Transverse colon (tissue), 4 donors: ENCODE measurements at regions of chr13 and their contacts with region 1.

Region 1: GRCh38 chr13:99501184-99501847 is at the start of gene TM9SF2:
- DNase-seq: peak; percentile 99
- H3K4me3 ChIP-seq: peak within 1 kb of the TSS; percentile 69 to 98 (median 92)
- H3K27ac ChIP-seq: peak within 1 kb of the TSS; percentile 92 to 97 (median 96)
- H3K4me1 ChIP-seq: peaks cover 11 to 82% (median 46%) of the 10 kb centered on the region in 4 donors
- H3K27me3 ChIP-seq: no peaks in the 10 kb centered on the region
- CTCF ChIP-seq: peak in 1 of 5 experiments; percentile 5
- EP300 ChIP-seq: no peak
- POLR2A ChIP-seq: peak; percentile 89
- total RNA-seq, gene TM9SF2: 27.9 to 171 (median 116) TPM

Region 2: DNA sequence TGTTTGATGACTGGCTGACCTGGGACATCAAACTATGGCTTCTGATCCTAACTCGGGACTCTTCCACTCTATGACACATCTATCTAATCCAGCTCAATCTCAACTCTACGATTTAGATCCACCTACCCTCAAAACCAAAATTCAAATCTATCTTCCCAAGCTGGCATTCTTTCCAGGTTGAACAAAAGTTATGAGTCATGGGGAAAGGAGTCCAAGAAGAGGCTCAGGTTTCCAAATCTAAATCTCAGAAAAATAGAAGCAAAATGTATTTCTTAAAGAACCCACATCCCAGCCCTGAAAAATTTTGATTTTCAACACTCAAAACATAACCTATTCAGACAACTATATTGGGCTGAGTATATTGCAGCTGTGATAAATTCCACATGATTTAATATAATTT is 1691.7 kb before region 1 on chr13:
- in situ Hi-C with region 1: no loop called
- intact Hi-C with region 1: loop called (anchors 10 kb)
- DNase-seq: no peak
- H3K4me3 ChIP-seq: no peak overlapping the region
- H3K27ac ChIP-seq: no peak overlapping the region
- H3K4me1 ChIP-seq: no peaks in the 10 kb centered on the region
- H3K27me3 ChIP-seq: no peaks in the 10 kb centered on the region
- CTCF ChIP-seq: no peak
- EP300 ChIP-seq: no peak
- POLR2A ChIP-seq: no peak

Region 3: DNA sequence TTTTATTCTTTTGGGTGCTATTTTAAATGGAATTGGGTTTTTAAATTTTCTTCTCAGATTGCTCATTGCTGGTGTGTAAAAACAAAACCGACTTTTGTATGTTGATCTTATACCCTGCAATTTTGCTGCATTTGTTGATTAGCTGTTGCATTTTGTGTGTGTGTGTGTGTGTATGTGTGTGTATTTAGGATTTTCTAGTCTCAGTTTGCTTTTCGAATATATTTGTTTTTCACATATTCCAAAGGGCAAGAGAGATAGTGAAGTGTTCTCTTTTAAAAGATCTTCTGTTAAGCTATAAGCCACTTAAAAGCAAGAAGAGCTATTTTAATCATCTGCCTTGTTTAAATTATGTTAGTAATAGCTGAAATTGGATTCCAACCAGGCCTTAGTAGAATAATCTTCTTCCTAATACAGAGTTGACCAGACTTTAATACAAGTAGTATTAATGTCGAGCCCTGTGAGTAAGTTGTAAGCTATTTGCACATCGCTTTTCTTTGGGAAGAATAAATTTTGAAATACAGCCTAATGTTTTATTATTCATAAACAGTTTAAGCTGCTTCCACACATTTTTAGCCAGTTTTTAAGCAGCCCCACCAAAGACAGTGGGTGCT is 57.4 kb after region 1 on chr13:
- in situ Hi-C with region 1: no loop called
- intact Hi-C with region 1: no loop called
- DNase-seq: no peak
- H3K4me3 ChIP-seq: no peak overlapping the region
- H3K27ac ChIP-seq: no peak overlapping the region
- H3K4me1 ChIP-seq: peaks cover 0 to 3% (median 0%) of the 10 kb centered on the region in 4 donors
- H3K27me3 ChIP-seq: no peaks in the 10 kb centered on the region
- CTCF ChIP-seq: no peak
- EP300 ChIP-seq: no peak
- POLR2A ChIP-seq: no peak

Region 4: GRCh38 chr13:99606324-99607066 is 105.2 kb after region 1 on chr13:
- in situ Hi-C with region 1: loop called in 1 of 4 experiments (anchors 25 kb)
- intact Hi-C with region 1: no loop called
- DNase-seq: peak; percentile 93
- H3K4me3 ChIP-seq: peak within 1 kb of the TSS; percentile 45 to 87 (median 73)
- H3K27ac ChIP-seq: peak within 1 kb of the TSS; percentile 87 to 93 (median 90)
- H3K4me1 ChIP-seq: peaks cover 0 to 25% (median 12%) of the 10 kb centered on the region in 4 donors
- H3K27me3 ChIP-seq: no peaks in the 10 kb centered on the region
- CTCF ChIP-seq: peak in 1 of 5 experiments; percentile 3
- EP300 ChIP-seq: no peak
- POLR2A ChIP-seq: peak; percentile 50

Region 5: DNA sequence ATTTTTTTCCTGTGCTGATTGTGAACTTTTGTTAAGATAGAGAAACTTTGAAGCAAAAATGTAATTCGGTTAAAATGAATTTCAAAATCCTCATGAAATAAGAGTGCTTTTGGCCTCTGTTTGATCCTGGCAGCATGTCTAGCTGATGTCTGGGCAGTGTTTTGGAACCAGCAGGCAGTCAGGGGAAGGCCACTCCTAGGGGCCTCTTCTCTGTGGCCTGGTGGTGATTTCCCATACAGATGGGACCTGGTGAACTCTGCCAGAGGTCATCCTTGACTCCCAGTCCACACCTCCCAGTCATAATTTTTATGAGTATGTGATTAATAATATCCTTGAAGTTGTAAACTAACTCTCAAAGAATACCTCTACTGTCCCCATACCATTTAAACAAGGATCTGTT is 814.2 kb after region 1 on chr13:
- in situ Hi-C with region 1: no loop called
- intact Hi-C with region 1: no loop called
- DNase-seq: no peak
- H3K4me3 ChIP-seq: no peak overlapping the region
- H3K27ac ChIP-seq: no peak overlapping the region
- H3K4me1 ChIP-seq: no peaks in the 10 kb centered on the region
- H3K27me3 ChIP-seq: no peaks in the 10 kb centered on the region
- CTCF ChIP-seq: no peak
- EP300 ChIP-seq: no peak
- POLR2A ChIP-seq: no peak